Mammary epithelial cell (primary cell): ENCODE measurements at regions of chr16 and their contacts with region 1.

Region 1: DNA sequence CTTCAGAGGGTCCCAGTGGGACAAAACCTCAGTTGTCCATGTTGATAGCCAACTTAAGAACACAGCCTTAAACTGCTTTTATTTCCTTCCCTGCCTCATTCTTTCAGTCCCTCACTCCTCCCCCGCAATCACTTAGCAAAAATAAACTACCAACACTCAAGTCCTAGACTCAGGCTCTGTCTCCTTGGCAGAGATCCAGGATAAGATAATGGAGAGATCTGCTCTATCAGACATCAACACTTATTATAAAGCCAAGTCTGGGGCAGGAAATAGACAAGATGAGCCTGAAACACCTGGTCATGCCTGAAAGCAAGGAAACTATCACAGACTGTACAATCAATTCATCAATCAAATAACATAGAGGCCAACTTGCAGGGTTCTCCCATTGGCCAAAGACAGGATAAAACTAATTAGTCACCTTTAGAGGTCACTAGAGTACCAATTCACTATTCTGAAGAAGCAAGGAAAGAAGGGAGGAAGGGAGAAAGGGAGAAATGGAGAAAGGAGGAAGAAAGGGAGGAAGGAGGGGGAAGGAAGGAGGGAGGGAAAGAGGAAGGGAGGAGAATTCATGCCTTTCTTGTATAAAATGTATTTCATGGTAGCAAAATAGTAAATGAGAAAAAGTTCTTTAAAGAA is 15.7 kb downstream of the HYDIN start:
- DNase-seq: peak; percentile 11
- H3K4me3 ChIP-seq: no peak overlapping the region
- H3K27ac ChIP-seq: no peak overlapping the region
- H3K4me1 ChIP-seq: no peaks in the 10 kb centered on the region
- H3K27me3 ChIP-seq: peaks cover 4% of the 10 kb centered on the region
- CTCF ChIP-seq: peak in 1 of 2 donors; percentile 38

Region 2: GRCh38 chr16:71242601-71243000 is 27.7 kb after region 1 on chr16:
- CTCF ChIA-PET with region 1: no interaction called
- dilution Hi-C with region 1: no loop called
- in situ Hi-C with region 1: no loop called
- intact Hi-C with region 1: no loop called
- DNase-seq: no peak
- H3K4me3 ChIP-seq: no peak overlapping the region
- H3K27ac ChIP-seq: no peak overlapping the region
- H3K4me1 ChIP-seq: no peaks in the 10 kb centered on the region
- H3K27me3 ChIP-seq: no peaks in the 10 kb centered on the region
- CTCF ChIP-seq: no peak

Region 3: DNA sequence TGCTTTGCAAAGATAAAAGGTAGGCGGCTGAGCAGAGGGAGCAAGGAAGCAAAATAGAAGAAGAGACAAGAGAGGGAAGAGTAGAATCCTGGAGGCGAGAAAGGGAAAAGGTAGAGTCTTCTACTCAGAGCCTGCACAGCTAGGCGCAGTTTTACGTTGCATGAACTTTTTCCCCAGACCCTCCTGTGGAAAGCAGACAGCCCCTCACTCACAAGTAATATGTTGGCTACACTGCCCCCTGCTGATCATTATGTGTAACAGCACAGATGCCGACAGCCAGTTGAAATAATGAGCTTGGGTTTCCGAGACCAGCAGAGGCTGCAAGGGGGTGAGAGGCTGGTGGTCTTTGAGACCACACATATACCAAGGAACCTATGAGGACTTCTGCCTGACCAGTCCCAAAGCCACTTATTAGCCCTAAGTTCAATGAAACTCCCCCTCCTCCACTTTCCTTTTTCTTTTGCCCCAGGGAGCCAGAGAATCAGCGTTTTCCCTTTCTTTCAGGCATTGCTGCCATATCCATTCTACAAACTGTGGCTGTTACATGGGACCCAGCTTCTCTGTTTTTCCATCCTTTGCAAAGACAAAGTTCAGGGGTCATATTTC is 96.8 kb after region 1 on chr16:
- CTCF ChIA-PET with region 1: no interaction called
- dilution Hi-C with region 1: no loop called
- in situ Hi-C with region 1: no loop called
- intact Hi-C with region 1: loop called (anchors 2 kb)
- DNase-seq: no peak
- H3K4me3 ChIP-seq: no peak overlapping the region
- H3K27ac ChIP-seq: no peak overlapping the region
- H3K4me1 ChIP-seq: peaks cover 6% of the 10 kb centered on the region
- H3K27me3 ChIP-seq: no peaks in the 10 kb centered on the region
- CTCF ChIP-seq: peak; percentile 82 to 84

Region 4: DNA sequence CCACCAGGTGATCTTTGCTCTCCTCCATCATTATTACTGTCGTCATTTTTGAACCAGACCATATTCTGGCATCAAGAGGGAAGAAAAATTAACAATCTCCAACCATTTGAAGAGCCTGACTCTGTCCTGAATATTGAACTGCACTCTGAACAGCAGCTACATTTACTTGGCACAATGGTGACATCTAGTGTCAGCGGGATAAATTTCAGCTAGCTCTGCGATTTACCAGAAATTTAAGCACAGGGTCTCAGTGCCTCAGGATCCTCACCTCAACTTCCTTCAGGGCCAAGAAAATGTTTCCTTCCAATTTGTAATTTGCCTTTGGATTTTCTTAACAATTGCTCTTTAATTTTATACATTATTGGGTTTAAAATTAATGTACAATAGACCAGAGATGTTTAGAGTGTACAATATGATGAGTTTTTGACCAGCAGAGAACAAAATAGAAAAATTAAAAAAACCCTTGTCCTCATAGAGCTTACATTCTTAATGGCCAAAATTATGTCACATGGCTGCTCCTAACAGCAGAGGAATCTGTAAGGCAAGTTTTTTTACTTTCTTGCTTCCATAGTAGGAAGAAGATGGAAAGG is 285.0 kb after region 1 on chr16:
- CTCF ChIA-PET with region 1: no interaction called
- dilution Hi-C with region 1: no loop called
- in situ Hi-C with region 1: no loop called
- intact Hi-C with region 1: loop called (anchors 10 kb)
- DNase-seq: peak; percentile 37
- H3K4me3 ChIP-seq: no peak overlapping the region
- H3K27ac ChIP-seq: no peak overlapping the region
- H3K4me1 ChIP-seq: no peaks in the 10 kb centered on the region
- H3K27me3 ChIP-seq: no peaks in the 10 kb centered on the region
- CTCF ChIP-seq: peak; percentile 72 to 82